HEK293T (cell line): ENCODE measurements at regions of chr11 and their contacts with region 1.

Region 1: DNA sequence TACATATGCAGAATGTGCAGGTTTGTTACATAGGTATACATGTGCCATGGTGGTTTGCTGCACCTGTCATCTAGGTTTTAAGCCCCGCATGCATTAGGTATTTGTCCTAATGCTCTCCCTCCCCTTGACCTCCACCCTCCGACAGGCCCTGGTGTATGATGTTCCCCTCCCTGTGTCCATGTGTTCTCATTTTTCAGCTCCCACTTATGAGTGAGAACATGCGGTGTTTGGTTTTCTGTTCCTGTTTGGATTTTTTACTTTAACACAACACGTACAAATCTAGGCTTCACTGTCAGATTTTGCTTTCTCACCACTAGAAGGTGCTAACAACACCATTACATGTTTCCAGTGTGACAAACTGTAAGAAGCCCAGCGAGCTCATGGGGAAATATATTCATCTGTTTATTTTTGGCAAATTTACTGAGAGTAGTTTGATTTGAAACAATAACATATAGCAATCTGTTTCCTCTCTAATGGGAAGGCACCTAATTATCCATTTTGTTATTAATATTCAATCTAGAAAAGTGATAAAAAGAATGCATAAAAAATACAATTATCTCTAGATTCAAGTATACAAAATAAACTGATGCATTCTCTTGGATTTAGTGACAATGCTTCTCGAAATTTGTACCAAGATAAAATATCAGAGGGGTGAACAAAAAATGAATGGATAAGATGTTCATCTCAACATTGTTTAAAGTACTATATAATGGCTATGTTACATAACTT is 23.2 kb upstream of the BIRC3 start:
- DNase-seq: peak; percentile 42

Region 2: GRCh38 chr11:102323542-102324251 is 29.7 kb after region 1 on chr11:
- CTCF ChIA-PET with region 1: no interaction called
- POLR2A ChIA-PET with region 1: no interaction called
- DNase-seq: no peak

Region 3: GRCh38 chr11:102614031-102614430 is 320.0 kb after region 1 on chr11:
- CTCF ChIA-PET with region 1: interaction called, 10 read pairs
- POLR2A ChIA-PET with region 1: no interaction called
- DNase-seq: no peak